Cardiac septum (tissue), 1 donor: ENCODE measurements at regions of chr7 and their contacts with region 1.

Region 1: GRCh38 chr7:102412548-102412947 is 16.4 kb downstream of the PRKRIP1 start:
- DNase-seq: peak; percentile 84

Region 2: DNA sequence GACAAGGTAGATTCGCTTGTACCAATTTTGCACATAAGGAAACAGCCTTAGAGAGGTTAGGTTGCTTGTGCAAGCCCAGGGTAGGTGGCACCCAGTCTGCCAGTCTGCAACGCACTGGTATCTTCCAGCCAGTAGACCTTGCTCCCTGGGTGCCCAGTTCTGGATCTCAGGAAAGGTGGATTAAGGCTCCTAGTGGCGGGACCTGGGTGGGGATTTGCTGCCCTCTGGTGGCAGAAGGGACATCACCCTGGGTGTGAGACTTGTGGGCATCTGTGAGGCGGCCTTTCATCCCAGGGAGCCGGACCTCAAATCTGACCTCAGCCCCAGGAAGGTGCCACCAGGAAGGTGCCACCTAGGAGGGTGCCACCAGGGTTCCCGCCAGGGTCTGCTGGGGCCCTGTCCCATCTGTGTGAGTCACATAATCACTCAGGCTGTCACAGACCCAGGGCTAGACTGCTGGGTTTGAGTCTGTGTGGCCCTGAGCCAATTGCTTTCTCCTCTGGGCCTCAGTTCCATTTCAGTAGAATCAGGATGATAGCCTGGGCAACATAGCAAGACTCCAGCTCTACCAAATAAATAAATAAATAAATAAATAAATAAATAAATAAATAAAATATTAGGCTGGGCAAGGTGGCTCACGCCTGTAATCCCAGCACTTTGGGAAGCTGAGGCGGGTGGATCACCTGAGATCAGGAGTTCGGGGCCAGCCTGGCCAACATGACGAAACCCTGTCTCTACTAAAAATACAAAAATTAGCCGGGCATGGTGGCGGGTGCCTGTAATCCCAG is 21.7 kb before region 1 on chr7:
- intact Hi-C with region 1: no loop called
- DNase-seq: peak; percentile 90

Region 3: GRCh38 chr7:102464577-102465280 is 52.2 kb after region 1 on chr7 and contains the starts of genes ALKBH4 and LRWD1:
- intact Hi-C with region 1: loop called (anchors 5 kb)
- DNase-seq: peak; percentile 98
- total RNA-seq, gene ALKBH4: 6.5 TPM
- total RNA-seq, gene LRWD1: 9.9 TPM